ENCODE measurements at regions of chr1 and their contacts with region 1.

Region 1: GRCh38 chr1:156677616-156678596 is 699 bp upstream of the NES start:
- DNase-seq: peak; percentile 80
- ATAC-seq: peak; percentile 66 to 69

Region 2: GRCh38 chr1:156625436-156626078 is 52.3 kb before region 1 on chr1:
- intact Hi-C with region 1: loop called in 1 of 2 experiments (anchors 5 kb)
- DNase-seq: peak; percentile 67
- ATAC-seq: peak; percentile 66 to 68